ENCODE measurements at regions of chr9 and their contacts with region 1.

Region 1: GRCh38 chr9:242461-243080 is 27.9 kb downstream of the DOCK8 start:
- DNase-seq: peak; percentile 42
- H3K4me3 Mint-ChIP-seq: peak overlapping the region; percentile 61
- H3K27ac Mint-ChIP-seq: peak overlapping the region; percentile 79
- H3K4me1 Mint-ChIP-seq: peaks cover 71% of the 10 kb centered on the region
- H3K27me3 Mint-ChIP-seq: no peaks in the 10 kb centered on the region

Region 2: GRCh38 chr9:224582-225520 is 17.7 kb before region 1 on chr9:
- CTCF ChIA-PET with region 1: interaction called, 17 read pairs
- POLR2A ChIA-PET with region 1: interaction called, 68 read pairs
- DNase-seq: peak; percentile 34
- H3K4me3 Mint-ChIP-seq: peak overlapping the region; percentile 49
- H3K27ac Mint-ChIP-seq: no peak overlapping the region
- H3K4me1 Mint-ChIP-seq: peaks cover 49% of the 10 kb centered on the region
- H3K27me3 Mint-ChIP-seq: no peaks in the 10 kb centered on the region

Region 3: GRCh38 chr9:278651-279050 is 36.1 kb after region 1 on chr9:
- CTCF ChIA-PET with region 1: interaction called, 5 read pairs
- POLR2A ChIA-PET with region 1: interaction called, 57 read pairs
- DNase-seq: peak; percentile 77
- H3K4me3 Mint-ChIP-seq: no peak overlapping the region
- H3K27ac Mint-ChIP-seq: no peak overlapping the region
- H3K4me1 Mint-ChIP-seq: peaks cover 35% of the 10 kb centered on the region
- H3K27me3 Mint-ChIP-seq: no peaks in the 10 kb centered on the region

Region 4: GRCh38 chr9:326667-327066 is 84.1 kb after region 1 on chr9:
- CTCF ChIA-PET with region 1: no interaction called
- POLR2A ChIA-PET with region 1: no interaction called
- DNase-seq: no peak
- H3K4me3 Mint-ChIP-seq: no peak overlapping the region
- H3K27ac Mint-ChIP-seq: no peak overlapping the region
- H3K4me1 Mint-ChIP-seq: no peaks in the 10 kb centered on the region
- H3K27me3 Mint-ChIP-seq: no peaks in the 10 kb centered on the region

Region 5: GRCh38 chr9:341634-342421 is 99.3 kb after region 1 on chr9:
- CTCF ChIA-PET with region 1: no interaction called
- POLR2A ChIA-PET with region 1: no interaction called
- DNase-seq: no peak
- H3K4me3 Mint-ChIP-seq: no peak overlapping the region
- H3K27ac Mint-ChIP-seq: peak overlapping the region; percentile 6
- H3K4me1 Mint-ChIP-seq: no peaks in the 10 kb centered on the region
- H3K27me3 Mint-ChIP-seq: no peaks in the 10 kb centered on the region

Region 6: GRCh38 chr9:551986-552929 is 309.7 kb after region 1 on chr9:
- CTCF ChIA-PET with region 1: no interaction called
- POLR2A ChIA-PET with region 1: no interaction called
- DNase-seq: no peak
- H3K4me3 Mint-ChIP-seq: no peak overlapping the region
- H3K27ac Mint-ChIP-seq: no peak overlapping the region
- H3K4me1 Mint-ChIP-seq: peaks cover 5% of the 10 kb centered on the region
- H3K27me3 Mint-ChIP-seq: peaks cover 6% of the 10 kb centered on the region

Region 7: GRCh38 chr9:1031951-1032601 is 789.5 kb after region 1 on chr9:
- CTCF ChIA-PET with region 1: no interaction called
- POLR2A ChIA-PET with region 1: no interaction called
- DNase-seq: no peak
- H3K4me3 Mint-ChIP-seq: no peak overlapping the region
- H3K27ac Mint-ChIP-seq: no peak overlapping the region
- H3K4me1 Mint-ChIP-seq: no peaks in the 10 kb centered on the region
- H3K27me3 Mint-ChIP-seq: peaks cover 26% of the 10 kb centered on the region